ENCODE measurements at regions of chr20 and their contacts with region 1.

Region 1: DNA sequence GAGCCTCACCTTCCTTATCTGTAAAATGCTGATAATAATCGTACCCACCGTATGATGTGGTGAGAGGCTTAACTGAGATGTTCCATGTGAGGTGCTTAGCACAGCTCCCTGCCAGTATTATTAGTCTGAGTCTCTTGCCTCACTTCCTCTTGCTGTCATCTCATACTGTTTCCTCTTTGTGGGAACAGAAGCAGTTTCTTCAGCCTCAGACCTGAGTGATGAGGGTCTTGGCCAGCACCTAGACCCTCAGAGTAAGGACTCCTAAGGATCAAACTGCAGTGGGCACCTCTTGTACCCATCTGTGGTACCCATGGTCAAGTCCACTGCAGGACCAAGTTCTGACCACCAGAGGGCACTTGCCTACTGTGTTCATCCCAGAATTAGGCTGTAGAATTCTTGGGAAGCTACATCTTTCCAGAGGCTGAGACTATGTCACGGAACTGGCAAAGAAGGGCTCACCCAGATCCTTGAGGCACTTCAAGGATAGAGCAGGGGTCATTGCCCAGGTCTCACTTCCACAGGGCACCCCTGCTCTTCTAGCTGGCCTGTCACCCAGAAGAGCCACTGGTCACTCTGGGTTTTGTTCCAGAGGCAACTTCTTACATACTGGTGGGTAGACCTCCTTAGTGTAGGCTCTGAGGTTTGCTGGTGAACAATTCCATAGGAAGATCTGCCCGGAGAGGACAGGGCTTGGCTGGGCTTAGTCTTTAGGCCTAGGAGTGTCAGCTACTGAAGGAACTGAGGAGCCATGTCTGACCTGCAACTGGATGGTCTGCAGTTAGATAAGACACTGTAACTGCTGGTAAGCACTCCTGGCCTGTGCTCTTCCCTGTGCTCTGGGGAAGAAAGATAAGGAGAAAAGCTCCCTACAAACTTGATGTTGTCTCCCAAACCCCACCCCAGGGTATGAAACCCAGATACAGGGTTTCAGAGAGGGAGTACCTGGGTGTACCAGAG is 20.6 kb upstream of the SGK2 start:
- DNase-seq: peak; percentile 39
- H3K4me3 ChIP-seq: no peak overlapping the region
- H3K27ac ChIP-seq: no peak overlapping the region
- H3K4me1 ChIP-seq: peaks cover 11% of the 10 kb centered on the region
- H3K27me3 ChIP-seq: no peaks in the 10 kb centered on the region
- CTCF ChIP-seq: peak; percentile 96 to 97

Region 2: DNA sequence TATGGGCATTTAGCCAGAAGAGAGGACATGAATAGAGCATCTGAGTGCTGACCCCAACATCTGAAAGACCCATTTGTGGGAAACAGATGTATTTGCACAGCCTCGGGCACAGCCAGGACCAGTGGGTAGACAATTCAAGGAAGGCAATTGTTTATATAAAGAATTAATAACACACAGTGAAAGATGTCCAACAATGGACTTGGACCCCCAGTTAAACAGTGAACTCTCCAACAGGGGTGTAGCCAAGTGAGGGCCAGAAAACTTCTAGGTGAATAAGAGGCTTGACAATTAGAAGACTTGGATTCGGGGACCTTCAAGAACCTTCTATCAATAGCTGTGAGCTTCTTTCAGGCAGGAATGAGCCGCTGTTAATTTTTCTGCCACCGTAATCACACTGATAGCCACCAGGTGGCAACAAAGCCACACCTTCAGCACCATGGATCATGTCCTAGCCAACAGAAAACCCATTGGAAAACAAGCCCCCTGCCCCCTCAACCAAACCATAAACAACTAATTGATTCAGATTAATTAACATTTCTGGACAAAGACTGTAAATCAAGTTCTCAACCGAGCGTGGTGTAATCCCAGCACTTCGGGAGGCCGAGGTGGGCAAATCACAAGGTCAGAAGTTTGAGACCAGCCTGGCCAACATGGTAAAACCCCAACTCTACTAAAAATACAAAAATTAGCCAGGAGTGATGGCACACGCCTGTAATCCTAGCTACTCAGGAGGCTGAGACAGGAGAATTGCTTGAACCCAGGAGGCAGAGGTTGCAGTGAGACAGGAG is 89.3 kb before region 1 on chr20:
- CTCF ChIA-PET with region 1: no interaction called
- dilution Hi-C with region 1: no loop called
- in situ Hi-C with region 1: no loop called
- intact Hi-C with region 1: loop called (anchors 1 kb)
- DNase-seq: peak; percentile 26
- H3K4me3 ChIP-seq: no peak overlapping the region
- H3K27ac ChIP-seq: no peak overlapping the region
- H3K4me1 ChIP-seq: no peaks in the 10 kb centered on the region
- H3K27me3 ChIP-seq: no peaks in the 10 kb centered on the region
- CTCF ChIP-seq: peak; percentile 79 to 88

Region 3: GRCh38 chr20:43691928-43692524 is 153.8 kb after region 1 on chr20:
- CTCF ChIA-PET with region 1: no interaction called
- dilution Hi-C with region 1: no loop called
- in situ Hi-C with region 1: no loop called
- intact Hi-C with region 1: loop called (anchors 1 kb)
- DNase-seq: peak; percentile 27
- H3K4me3 ChIP-seq: no peak overlapping the region
- H3K27ac ChIP-seq: no peak overlapping the region
- H3K4me1 ChIP-seq: no peaks in the 10 kb centered on the region
- H3K27me3 ChIP-seq: no peaks in the 10 kb centered on the region
- CTCF ChIP-seq: peak; percentile 56 to 74

Region 4: DNA sequence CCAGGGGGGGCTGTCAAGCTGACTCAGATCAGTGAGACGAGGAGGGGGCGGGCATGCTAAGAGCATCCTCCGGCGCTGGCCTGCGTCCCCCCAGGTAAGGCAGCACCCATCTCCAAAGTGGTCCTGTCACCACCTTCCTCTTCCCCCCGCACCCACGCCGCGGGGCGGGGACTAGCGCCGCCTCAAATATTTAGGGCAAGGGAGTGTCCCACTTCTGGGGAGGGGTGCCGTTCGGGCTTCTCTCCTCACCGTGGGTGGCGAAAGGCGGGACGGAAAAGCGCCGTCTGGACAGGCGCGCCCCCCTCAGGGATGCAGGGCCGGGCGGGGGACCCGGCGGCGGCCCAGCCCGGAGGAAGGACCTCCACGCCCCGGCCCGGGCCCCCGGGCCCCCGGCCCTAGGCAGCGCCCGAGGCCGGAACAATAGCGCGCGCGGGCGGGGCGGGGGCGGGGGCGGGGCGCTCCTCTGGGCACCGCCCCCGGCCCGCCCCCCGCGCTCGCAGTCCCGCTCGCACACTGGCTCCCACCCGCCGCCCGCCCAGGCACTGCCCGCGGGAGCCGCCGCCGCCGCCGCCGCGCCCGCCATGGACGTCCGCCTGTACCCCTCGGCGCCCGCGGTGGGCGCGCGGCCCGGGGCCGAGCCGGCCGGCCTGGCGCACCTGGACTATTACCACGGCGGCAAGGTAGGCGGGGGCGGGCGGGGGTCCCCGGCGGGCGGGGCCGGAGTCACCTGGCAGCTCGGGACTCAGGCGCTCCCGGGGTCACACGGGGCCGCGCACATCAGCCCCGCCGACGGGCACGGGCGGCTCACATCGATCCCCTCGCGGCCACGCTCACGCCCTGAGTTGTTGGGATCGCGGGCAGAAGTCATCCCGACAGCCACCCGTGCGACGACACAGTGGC is 376.4 kb after region 1 on chr20 and contains the start of gene TOX2:
- CTCF ChIA-PET with region 1: no interaction called
- dilution Hi-C with region 1: no loop called
- in situ Hi-C with region 1: no loop called
- intact Hi-C with region 1: loop called (anchors 5 kb)
- DNase-seq: no peak
- H3K4me3 ChIP-seq: peak within 1 kb of the TSS in 2 of 3 experiments; percentile 47 to 48
- H3K27ac ChIP-seq: no peak within 1 kb of the TSS
- H3K4me1 ChIP-seq: peaks cover 16% of the 10 kb centered on the region
- H3K27me3 ChIP-seq: peaks cover 15% of the 10 kb centered on the region
- CTCF ChIP-seq: no peak
- total RNA-seq, gene TOX2: 0.83 to 5.0 TPM

Region 5: DNA sequence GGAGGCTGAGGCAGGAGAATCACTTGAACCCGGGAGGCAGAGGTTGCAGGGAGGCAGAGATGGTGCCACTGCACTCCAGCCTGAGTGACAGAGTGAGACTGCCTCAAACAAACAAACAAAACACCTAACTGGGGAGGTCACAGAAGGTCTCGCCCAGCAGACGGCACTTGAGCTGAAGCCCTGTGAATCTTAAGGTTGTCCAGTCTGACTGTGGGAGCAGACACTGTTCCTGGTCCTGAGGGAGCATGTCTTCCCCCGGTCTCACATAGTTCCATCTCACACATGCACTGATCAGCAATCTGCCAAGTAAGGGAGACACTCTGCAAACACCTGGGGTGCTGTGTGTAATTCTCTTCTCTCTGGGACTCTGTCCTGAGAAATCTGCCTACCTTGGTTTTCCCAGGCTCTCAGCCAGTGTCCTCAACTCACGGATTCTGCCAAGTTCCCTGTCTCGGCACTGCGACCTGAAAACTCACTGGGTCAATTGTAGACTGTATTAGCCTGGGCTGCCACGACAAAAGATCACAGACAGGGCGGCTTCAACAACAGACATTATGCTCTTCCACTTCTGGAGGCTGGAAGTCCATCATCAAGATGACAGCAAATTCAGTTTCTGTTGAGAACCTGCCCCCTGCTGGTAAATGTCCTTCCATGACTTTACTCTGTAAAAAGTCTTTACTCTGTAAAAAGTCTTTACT is 554.5 kb after region 1 on chr20:
- CTCF ChIA-PET with region 1: no interaction called
- dilution Hi-C with region 1: no loop called
- in situ Hi-C with region 1: loop called (anchors 25 kb)
- intact Hi-C with region 1: loop called (anchors 1 kb)
- DNase-seq: peak; percentile 38
- H3K4me3 ChIP-seq: no peak overlapping the region
- H3K27ac ChIP-seq: no peak overlapping the region
- H3K4me1 ChIP-seq: peaks cover 21% of the 10 kb centered on the region
- H3K27me3 ChIP-seq: no peaks in the 10 kb centered on the region
- CTCF ChIP-seq: peak; percentile 52 to 55